GM13977 (cell line): ENCODE measurements at regions of chr3 and their contacts with region 1.

Region 1: DNA sequence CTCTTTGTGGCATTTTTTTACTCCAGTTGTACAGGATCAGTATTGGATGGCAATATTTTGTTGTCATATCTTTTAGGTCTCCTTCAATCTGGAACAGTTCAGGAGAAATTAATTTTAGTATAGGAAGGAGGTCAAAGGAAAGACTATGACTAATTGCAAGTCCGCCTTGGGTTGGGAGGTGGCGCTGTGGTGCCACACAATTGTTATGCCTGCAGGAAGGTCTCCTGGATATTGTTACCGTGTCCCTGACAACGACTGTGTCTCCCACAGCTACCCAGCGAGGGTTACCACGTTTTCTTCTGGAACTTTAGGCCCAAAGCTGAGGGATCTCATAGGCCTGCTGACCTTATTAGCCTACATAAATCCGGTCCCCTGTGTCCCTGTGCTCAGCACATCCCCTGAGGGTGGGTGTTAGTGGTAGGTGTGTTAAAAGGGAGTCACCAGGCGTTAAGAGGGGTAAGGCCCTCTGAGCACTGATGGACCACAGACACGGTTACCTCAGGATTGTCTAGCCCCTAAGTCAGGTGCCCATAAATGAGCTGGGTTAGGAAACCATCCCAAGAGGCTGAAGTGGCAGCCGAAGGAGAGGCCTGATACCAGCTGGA is 31.5 kb downstream of the KCNAB1 start:
- DNase-seq: peak; percentile 35
- CTCF ChIP-seq: peak; percentile 81

Region 2: GRCh38 chr3:155441026-155441425 is 710.9 kb before region 1 on chr3:
- in situ Hi-C with region 1: no loop called
- DNase-seq: no peak
- CTCF ChIP-seq: no peak

Region 3: GRCh38 chr3:155766206-155766605 is 385.7 kb before region 1 on chr3:
- in situ Hi-C with region 1: no loop called
- DNase-seq: no peak
- CTCF ChIP-seq: no peak

Region 4: DNA sequence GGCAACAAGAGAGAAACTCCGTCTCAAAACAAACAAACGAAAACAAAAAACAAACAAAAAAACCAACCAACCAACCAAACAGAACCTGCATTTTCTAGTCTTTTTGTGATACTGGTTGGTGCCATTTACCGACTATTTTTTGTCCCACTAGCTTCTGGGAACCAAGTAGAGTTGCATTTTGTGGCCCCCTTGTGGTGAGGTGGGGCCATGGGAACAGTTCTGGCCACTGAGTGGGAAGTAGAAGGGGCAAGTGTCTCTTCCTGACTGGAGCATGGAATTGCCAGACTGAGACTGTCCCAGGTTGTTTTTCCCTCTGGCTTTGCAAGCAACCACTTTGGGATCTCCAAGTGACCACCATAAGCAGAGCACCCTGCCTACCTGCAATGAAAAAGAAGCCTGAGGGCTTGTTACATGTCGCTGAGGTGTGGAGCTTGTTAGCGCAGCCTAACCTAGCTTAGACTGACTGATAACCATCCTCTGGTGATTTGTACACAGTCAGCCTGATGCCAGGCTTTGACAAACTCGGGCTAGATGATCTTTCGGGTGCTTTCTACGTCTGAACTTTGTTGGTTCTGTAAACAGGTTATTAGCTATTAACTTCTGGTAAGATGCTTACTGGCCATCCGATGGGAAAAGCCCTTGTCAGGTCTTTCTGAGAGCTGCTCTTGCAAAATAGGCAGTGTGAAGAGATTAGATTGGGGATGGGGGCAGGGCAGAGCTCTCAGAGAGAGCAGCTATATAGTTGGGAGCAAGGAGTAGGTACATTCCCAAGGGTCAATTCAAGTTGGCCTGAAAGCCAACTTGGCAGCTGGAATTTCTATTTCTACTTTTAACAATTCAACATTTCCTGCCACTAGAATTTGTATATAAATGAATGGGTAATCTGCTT is 230.8 kb after region 1 on chr3:
- in situ Hi-C with region 1: loop called (anchors 10 kb)
- DNase-seq: peak; percentile 43
- CTCF ChIP-seq: peak; percentile 77

Region 5: DNA sequence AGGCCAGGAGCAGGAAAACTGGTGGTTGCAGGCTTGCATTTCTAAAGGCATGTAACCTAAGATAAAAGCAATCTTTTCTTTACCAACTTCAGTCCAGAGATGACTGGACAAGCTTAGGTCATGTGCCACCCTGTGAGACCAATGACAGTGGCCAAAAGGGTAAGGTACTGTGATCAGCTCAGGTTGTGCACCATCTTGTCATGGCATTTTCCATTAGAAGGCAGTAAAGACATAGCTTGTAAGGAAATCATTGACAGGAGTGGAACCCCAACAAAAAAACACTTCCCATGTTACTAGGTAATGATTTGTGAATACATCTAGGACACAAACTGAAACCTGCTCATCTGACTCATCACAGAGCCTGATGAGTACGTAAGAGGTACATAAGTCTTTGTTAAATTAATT is 367.8 kb after region 1 on chr3:
- in situ Hi-C with region 1: no loop called
- DNase-seq: no peak
- CTCF ChIP-seq: no peak

Region 6: DNA sequence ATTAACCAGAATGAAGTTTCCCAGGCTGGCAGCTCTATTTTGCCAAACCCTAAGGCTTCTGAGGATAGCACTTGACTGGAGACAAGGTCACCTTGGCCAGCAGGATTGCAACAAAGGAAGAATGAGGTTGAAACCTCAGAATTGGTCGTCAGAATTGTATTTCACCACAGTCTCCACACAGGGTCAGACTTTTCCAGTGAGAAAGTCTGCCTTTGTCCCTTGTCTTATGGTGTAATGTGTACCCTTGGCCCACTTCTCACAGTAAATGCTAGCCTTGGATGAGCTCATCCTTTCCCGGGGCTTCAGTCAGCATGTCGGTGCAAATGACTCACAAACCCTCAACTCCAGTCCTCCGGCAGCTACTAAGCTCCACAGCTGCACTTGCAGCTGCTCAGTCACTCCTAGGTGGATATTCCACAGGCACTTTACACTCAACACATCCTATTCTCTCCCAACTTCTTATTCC is 383.3 kb after region 1 on chr3:
- in situ Hi-C with region 1: loop called (anchors 25 kb)
- DNase-seq: no peak
- CTCF ChIP-seq: no peak

Region 7: GRCh38 chr3:156674046-156674910 is 522.4 kb after region 1 on chr3 and contains the start of gene TIPARP:
- in situ Hi-C with region 1: loop called (anchors 25 kb)
- DNase-seq: peak; percentile 98
- CTCF ChIP-seq: peak; percentile 86

Region 8: GRCh38 chr3:157130467-157131251 is 978.7 kb after region 1 on chr3:
- in situ Hi-C with region 1: loop called (anchors 25 kb)
- DNase-seq: peak; percentile 39
- CTCF ChIP-seq: peak; percentile 67